Activated B cell treated with CpG ODN at 0.5 μM for 24 hours (primary cell): ENCODE measurements at regions of chr21 and their contacts with region 1.

Region 1: DNA sequence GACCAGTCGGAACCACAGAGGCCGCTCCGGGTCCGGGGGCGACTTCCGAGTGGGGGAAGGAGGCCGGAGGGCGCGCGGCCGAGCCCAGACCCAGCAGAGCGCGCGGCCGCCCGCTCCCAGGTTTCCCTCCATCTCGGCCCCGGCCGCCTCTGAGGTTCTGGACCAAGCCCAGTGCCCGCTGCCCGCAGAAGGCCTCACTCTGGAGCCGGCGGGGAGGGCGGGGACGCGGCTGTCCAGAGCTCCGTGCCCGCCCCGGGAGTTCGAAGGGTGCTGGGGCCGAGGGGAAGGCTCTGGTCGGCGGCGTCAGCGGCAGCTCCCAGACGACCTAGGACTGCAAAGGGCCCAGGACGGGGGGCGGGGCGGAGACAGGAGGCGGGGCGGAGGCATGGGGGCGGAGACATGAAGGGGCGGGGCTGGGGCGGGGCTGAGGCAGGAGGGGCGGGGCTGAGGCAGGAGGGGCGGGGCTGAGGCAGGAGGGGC is 48.0 kb upstream of the SLC19A1 start:
- DNase-seq: peak; percentile 43
- ATAC-seq: peak; percentile 70
- H3K4me3 Mint-ChIP-seq: no peak overlapping the region
- H3K27ac Mint-ChIP-seq: no peak overlapping the region
- H3K4me1 Mint-ChIP-seq: peaks cover 3% of the 10 kb centered on the region
- H3K27me3 Mint-ChIP-seq: peaks cover 30% of the 10 kb centered on the region
- CTCF ChIP-seq: no peak

Region 2: GRCh38 chr21:44454747-44455523 is 1135.4 kb before region 1 on chr21 and contains the start of gene LRRC3:
- CTCF ChIA-PET with region 1: no interaction called
- POLR2A ChIA-PET with region 1: no interaction called
- intact Hi-C with region 1: no loop called
- DNase-seq: peak; percentile 71
- ATAC-seq: peak; percentile 82
- H3K4me3 Mint-ChIP-seq: peak within 1 kb of the TSS; percentile 75
- H3K27ac Mint-ChIP-seq: no peak within 1 kb of the TSS
- H3K4me1 Mint-ChIP-seq: peaks cover 2% of the 10 kb centered on the region
- H3K27me3 Mint-ChIP-seq: peaks cover 4% of the 10 kb centered on the region
- CTCF ChIP-seq: no peak
- total RNA-seq, gene LRRC3: 0.91 and 1.00 TPM in 2 replicates

Region 3: DNA sequence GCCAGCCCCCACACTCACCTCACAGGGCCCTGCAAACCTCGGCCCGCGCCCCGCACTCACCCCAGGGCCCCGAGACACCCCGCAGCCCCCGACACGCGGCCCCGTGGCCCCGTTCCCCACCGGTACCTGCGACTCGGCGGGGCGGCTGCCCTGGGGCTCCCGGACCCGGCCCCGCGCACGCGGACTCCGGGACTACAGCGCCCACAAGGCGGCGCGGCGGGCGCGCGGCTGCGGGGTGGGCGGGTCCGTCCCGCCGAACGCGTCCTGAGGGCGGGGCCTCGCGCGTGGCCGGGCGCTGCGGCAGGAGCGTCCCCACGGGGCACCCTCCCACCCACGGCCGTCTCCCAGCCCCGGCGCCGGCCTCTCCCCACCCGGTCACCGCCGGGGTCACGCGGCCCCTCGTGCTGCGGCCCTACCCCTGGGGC is 48.0 kb before region 1 on chr21 and contains the start of gene SLC19A1:
- CTCF ChIA-PET with region 1: no interaction called
- POLR2A ChIA-PET with region 1: no interaction called
- intact Hi-C with region 1: loop called (anchors 1 kb)
- DNase-seq: peak; percentile 81
- ATAC-seq: peak; percentile 94
- H3K4me3 Mint-ChIP-seq: peak within 1 kb of the TSS; percentile 77
- H3K27ac Mint-ChIP-seq: no peak within 1 kb of the TSS
- H3K4me1 Mint-ChIP-seq: peaks cover 4% of the 10 kb centered on the region
- H3K27me3 Mint-ChIP-seq: no peaks in the 10 kb centered on the region
- CTCF ChIP-seq: no peak
- total RNA-seq, gene SLC19A1: 7.4 and 10.7 TPM in 2 replicates

Region 4: DNA sequence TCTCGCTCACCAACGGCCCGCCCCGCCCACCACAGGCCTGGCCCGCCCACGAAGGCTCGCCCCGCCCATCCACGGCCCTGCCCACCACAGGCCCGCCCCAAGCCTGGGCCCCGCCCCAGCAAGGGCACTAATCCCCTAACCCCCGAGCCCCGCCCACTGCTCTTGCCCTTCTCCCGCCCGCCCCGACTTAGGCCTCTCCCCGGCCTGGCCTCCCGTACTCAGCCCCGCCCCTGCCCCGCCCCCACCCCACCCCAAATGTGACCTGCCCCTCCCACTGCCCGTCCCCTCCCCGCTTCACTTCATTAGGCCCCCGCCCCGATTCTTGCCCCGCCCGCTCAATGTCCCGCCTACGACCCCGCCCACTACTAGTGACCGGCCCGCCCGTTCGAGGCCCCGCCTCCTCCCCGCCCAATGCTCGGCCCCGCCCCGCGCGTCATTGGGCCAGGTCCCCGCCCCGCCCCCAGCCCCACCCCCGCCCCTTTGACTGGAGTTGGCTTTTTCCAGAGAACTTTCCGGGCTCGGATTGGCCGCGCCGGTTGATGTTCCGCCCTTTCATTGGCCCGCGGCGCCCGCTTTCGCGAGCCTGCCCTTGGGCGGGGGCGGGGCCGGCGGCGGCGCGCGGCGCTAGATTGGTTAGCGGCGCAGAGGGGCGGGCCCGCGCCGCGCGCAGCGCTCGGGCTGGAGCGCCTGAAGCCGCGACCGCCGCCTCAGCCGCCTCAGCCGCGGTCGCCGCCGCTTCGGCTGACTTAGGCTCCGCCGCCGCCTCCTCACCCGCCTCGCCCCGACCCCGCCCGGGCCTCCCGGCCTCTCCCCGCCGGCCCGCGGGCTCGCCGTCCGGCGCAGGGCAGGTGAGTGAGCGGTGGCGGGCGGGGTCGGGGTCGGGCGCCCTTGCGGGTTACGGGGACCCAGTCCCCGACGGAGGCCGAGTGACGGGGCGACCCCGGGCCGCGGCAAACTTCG is 53.0 kb after region 1 on chr21 and contains the start of gene PCBP3:
- CTCF ChIA-PET with region 1: no interaction called
- POLR2A ChIA-PET with region 1: no interaction called
- intact Hi-C with region 1: loop called (anchors 1 kb)
- DNase-seq: peak; percentile 75
- ATAC-seq: peak; percentile 79
- H3K4me3 Mint-ChIP-seq: peak within 1 kb of the TSS; percentile 67
- H3K27ac Mint-ChIP-seq: no peak within 1 kb of the TSS
- H3K4me1 Mint-ChIP-seq: peaks cover 40% of the 10 kb centered on the region
- H3K27me3 Mint-ChIP-seq: peaks cover 32% of the 10 kb centered on the region
- CTCF ChIP-seq: no peak
- total RNA-seq, gene PCBP3: not detected in 2 replicates

Region 5: DNA sequence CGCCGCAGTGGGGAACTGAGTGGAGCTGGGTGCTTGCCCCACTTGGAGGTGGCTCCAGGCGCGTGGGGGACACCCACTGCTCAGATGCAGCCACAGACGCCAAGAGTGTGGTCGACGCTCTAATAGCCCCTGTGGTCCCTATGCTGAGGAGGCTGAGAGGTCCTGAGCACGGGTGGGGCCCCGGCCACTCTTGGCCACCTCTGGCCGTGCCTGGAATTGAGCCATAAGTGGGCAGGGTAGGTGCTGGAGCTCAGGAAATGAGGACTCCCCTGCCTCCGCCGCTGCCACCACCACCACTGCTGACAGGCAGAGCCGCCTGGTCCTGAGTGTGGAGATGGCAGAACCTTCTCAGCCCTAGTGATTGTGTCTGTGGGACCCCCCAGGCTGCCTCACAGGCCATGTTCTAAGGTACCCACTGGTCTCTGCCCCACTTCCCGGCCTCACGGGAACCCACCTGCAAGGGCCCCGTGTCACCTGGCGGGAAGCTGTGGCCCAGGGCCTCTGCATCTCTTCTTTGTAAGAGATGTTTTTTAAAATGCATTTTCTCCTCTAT is 833.8 kb after region 1 on chr21:
- CTCF ChIA-PET with region 1: no interaction called
- POLR2A ChIA-PET with region 1: no interaction called
- intact Hi-C with region 1: no loop called
- DNase-seq: no peak
- ATAC-seq: no peak
- H3K4me3 Mint-ChIP-seq: no peak overlapping the region
- H3K27ac Mint-ChIP-seq: no peak overlapping the region
- H3K4me1 Mint-ChIP-seq: peaks cover 3% of the 10 kb centered on the region
- H3K27me3 Mint-ChIP-seq: no peaks in the 10 kb centered on the region
- CTCF ChIP-seq: no peak